ENCODE measurements at regions of chr4 and their contacts with region 1.

Region 1: GRCh38 chr4:98995183-98996055 is at the start of gene METAP1:
- DNase-seq: peak; percentile 95 to 98 (median 97)
- H3K4me3 ChIP-seq: peak within 1 kb of the TSS; percentile 80 to 85
- H3K4me3 Mint-ChIP-seq: peak within 1 kb of the TSS; percentile 78 to 97 (median 91)
- H3K27ac ChIP-seq: peak within 1 kb of the TSS; percentile 81
- H3K27ac Mint-ChIP-seq: peak within 1 kb of the TSS; percentile 92 to 100 (median 99)
- H3K4me1 ChIP-seq: peaks cover 39% of the 10 kb centered on the region
- H3K4me1 Mint-ChIP-seq: peaks cover 23 to 47% (median 35%) of the 10 kb centered on the region in 4 donors
- H3K27me3 ChIP-seq: no peaks in the 10 kb centered on the region
- H3K27me3 Mint-ChIP-seq: no peaks in the 10 kb centered on the region
- total RNA-seq, gene METAP1: 36.4 to 36.7 TPM

Region 2: DNA sequence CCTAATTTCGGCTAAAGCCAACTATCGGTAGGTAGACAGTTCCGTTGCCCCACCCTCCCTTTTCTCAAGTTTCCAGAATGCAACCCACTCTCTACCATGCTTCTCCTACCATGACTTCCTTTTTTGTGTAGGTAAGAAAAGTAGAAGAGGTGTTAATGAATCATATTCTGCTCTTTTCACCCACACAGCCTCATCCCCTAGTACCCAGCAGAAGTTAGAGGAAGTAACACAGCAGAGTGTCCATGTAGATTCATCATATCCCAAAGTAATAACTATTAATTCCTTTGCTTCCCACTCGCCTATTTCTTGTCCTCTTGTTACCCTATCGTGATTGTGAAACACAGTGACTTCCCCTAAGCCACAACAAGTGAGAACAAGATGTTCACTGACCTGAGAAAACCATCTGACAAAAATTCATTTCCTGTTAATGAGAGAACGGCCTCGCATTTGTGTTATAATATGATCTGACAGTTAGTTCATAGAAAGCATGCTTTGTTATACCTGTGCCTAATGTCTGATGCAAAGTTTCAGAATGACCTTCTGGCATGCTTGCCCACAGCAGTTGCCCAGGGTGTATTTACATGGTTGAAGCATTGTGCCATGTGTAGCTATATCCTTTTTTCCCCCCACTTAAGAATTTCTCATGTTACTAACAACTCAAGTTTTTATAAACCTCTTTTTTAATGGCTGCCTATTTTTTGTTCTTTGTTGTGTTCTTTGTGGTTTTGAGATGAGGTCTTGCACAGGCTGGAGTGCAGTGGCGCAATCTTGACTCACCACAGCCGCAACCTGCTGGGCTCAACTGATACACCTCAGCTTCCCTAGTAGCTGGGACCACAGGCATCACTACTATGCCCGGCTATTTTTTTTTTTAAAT is 548.7 kb before region 1 on chr4:
- CTCF ChIA-PET with region 1: no interaction called
- POLR2A ChIA-PET with region 1: no interaction called
- intact Hi-C with region 1: loop called (anchors 5 kb)
- DNase-seq: peak; percentile 74 to 78 (median 77)
- H3K4me3 ChIP-seq: peak overlapping the region in 1 of 2 donors; percentile 3
- H3K4me3 Mint-ChIP-seq: peak overlapping the region; percentile 61 to 88 (median 78)
- H3K27ac ChIP-seq: peak overlapping the region; percentile 37
- H3K27ac Mint-ChIP-seq: peak overlapping the region; percentile 76 to 93 (median 91)
- H3K4me1 ChIP-seq: peaks cover 48% of the 10 kb centered on the region
- H3K4me1 Mint-ChIP-seq: peaks cover 37 to 47% (median 40%) of the 10 kb centered on the region in 4 donors
- H3K27me3 ChIP-seq: no peaks in the 10 kb centered on the region
- H3K27me3 Mint-ChIP-seq: no peaks in the 10 kb centered on the region

Region 3: GRCh38 chr4:98939892-98940298 is 55.5 kb before region 1 on chr4:
- CTCF ChIA-PET with region 1: interaction called, 13 read pairs
- POLR2A ChIA-PET with region 1: interaction called, 3 read pairs
- intact Hi-C with region 1: loop called (anchors 2 kb)
- DNase-seq: peak in 4 of 5 donors; percentile 21 to 32 (median 26)
- H3K4me3 ChIP-seq: no peak overlapping the region
- H3K4me3 Mint-ChIP-seq: no peak overlapping the region
- H3K27ac ChIP-seq: no peak overlapping the region
- H3K27ac Mint-ChIP-seq: no peak overlapping the region
- H3K4me1 ChIP-seq: no peaks in the 10 kb centered on the region
- H3K4me1 Mint-ChIP-seq: peaks cover 0 to 12% (median 5%) of the 10 kb centered on the region in 4 donors
- H3K27me3 ChIP-seq: no peaks in the 10 kb centered on the region
- H3K27me3 Mint-ChIP-seq: no peaks in the 10 kb centered on the region

Region 4: DNA sequence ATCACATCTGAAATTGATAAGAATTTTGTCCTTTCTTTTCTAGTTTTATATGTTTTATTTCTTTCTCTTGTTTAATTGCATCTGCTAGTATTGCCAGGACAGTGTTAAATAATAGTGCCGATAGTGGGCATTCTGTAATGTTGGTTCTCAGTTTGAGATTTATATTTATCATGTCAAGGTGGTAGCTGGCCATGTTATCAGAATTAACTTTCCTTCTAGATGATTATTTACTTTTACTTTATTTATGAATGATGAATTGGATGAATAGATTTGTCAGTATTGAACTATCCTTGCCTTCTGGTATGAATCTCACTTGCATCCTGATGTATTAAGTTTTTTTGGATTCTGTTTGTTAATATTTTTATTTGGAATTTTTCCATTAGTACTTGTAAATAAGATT is 42.8 kb after region 1 on chr4:
- CTCF ChIA-PET with region 1: interaction called, 26 read pairs
- POLR2A ChIA-PET with region 1: interaction called, 41 read pairs
- intact Hi-C with region 1: loop called (anchors 1 kb)
- DNase-seq: no peak
- H3K4me3 ChIP-seq: no peak overlapping the region
- H3K4me3 Mint-ChIP-seq: no peak overlapping the region
- H3K27ac ChIP-seq: no peak overlapping the region
- H3K27ac Mint-ChIP-seq: no peak overlapping the region
- H3K4me1 ChIP-seq: peaks cover 10% of the 10 kb centered on the region
- H3K4me1 Mint-ChIP-seq: peaks cover 7 to 16% (median 11%) of the 10 kb centered on the region in 4 donors
- H3K27me3 ChIP-seq: no peaks in the 10 kb centered on the region
- H3K27me3 Mint-ChIP-seq: no peaks in the 10 kb centered on the region

Region 5: DNA sequence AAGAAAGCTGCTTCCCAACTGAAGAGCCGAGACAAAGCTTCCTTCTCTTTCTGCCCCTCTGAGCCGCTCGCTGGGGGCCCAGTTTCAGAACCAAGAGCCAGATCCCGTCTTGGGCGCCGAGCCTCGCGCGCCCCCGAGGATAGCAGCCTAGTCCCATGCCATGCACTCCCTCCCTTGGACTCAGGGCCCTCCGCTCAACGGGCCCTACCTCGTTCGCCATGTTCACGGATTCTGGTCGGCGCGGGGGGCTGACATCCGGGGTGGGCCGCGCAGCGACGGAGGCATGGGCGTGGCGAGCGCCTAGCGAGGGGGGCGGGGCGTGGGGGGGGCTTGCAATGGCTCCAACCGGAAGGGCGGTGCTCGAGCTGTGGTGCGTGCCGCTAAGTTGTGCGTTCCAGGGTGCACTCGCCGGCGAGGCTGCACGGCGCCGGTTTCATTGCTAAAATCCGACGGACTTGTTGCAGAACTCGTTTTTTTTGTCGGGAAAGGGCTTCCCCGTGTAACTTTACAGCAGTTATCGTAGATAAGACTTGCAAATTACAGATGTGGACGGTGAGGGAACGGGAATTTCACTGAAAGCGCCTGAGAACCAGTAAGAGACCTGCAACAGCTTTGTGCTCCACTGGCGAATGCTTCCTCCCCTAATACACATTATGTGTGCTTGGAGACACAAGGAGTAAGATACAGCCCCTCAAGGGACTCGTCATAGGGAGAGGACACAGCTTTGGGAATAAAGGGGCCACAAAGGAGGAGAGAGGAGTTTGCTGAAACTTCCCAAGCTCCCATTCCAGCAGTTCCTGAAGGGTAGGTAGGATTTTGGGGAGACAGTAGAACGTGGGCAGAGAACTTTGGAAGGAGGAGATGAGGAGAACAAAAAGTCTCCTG is 93.3 kb after region 1 on chr4 and contains the start of gene ADH5:
- CTCF ChIA-PET with region 1: interaction called, 40 read pairs
- POLR2A ChIA-PET with region 1: interaction called, 80 read pairs
- intact Hi-C with region 1: loop called (anchors 1 kb)
- DNase-seq: peak; percentile 83 to 90 (median 86)
- H3K4me3 ChIP-seq: peak within 1 kb of the TSS; percentile 73 to 99
- H3K4me3 Mint-ChIP-seq: peak within 1 kb of the TSS; percentile 92 to 99 (median 98)
- H3K27ac ChIP-seq: peak within 1 kb of the TSS; percentile 77
- H3K27ac Mint-ChIP-seq: peak within 1 kb of the TSS; percentile 89 to 99 (median 98)
- H3K4me1 ChIP-seq: peaks cover 39% of the 10 kb centered on the region
- H3K4me1 Mint-ChIP-seq: peaks cover 35 to 71% (median 54%) of the 10 kb centered on the region in 4 donors
- H3K27me3 ChIP-seq: no peaks in the 10 kb centered on the region
- H3K27me3 Mint-ChIP-seq: no peaks in the 10 kb centered on the region
- total RNA-seq, gene ADH5: 75.6 to 80.5 TPM

Region 6: DNA sequence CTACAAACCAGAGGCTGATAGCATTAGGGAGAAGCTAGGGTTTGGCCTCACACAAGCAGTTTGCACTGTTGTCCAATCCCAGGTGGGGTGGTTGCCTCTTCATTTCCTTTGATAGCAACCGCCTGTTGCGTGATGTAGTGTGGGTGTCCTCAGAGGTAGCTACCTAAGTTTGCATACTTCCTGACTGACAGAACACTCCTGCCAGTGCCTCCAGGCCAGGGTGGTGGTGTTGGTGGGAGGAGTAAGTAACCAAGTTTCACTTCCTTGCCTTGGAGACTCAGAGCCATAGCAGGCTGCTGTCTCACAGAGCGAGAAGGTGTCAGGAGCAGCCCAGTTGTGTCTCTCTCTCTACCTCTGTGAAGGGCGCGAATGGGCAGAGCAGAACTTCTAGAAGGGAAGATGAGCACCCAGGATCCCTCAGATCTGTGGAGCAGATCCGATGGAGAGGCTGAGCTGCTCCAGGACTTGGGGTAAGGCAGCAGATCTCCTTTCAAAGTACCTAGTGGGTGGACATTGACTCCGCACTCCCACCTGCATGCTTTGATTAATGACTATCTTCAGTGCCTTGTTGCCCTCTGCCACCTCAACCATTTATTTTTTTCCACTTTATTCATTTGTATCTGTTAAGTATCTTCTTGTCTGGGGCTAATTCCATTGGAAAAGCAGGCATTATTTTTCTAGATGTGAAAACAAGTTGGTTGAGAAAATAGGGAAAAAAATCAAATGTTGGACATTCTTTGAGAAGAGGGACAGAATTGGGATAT is 821.3 kb after region 1 on chr4 and contains the start of gene DAPP1:
- CTCF ChIA-PET with region 1: no interaction called
- POLR2A ChIA-PET with region 1: interaction called, 3 read pairs
- intact Hi-C with region 1: loop called (anchors 10 kb)
- DNase-seq: peak; percentile 82 to 93 (median 87)
- H3K4me3 ChIP-seq: peak within 1 kb of the TSS; percentile 55 to 92
- H3K4me3 Mint-ChIP-seq: peak within 1 kb of the TSS; percentile 89 to 95 (median 91)
- H3K27ac ChIP-seq: peak within 1 kb of the TSS; percentile 69
- H3K27ac Mint-ChIP-seq: peak within 1 kb of the TSS; percentile 91 to 98 (median 97)
- H3K4me1 ChIP-seq: peaks cover 63% of the 10 kb centered on the region
- H3K4me1 Mint-ChIP-seq: peaks cover 44 to 61% (median 54%) of the 10 kb centered on the region in 4 donors
- H3K27me3 ChIP-seq: no peaks in the 10 kb centered on the region
- H3K27me3 Mint-ChIP-seq: no peaks in the 10 kb centered on the region
- total RNA-seq, gene DAPP1: 21.3 to 23.0 TPM